ENCODE measurements at regions of chr10 and their contacts with region 1.

Region 1: GRCh38 chr10:97341416-97341815 is 6.9 kb upstream of the FRAT2 start:
- DNase-seq: no peak
- H3K4me3 ChIP-seq: no peak overlapping the region
- H3K27ac ChIP-seq: no peak overlapping the region
- H3K4me1 ChIP-seq: peaks cover 11% of the 10 kb centered on the region
- H3K27me3 ChIP-seq: no peaks in the 10 kb centered on the region
- CTCF ChIP-seq: no peak

Region 2: GRCh38 chr10:97434055-97434454 is 92.6 kb after region 1 on chr10:
- CTCF ChIA-PET with region 1: no interaction called
- dilution Hi-C with region 1: loop called (anchors 5 kb)
- in situ Hi-C with region 1: no loop called
- intact Hi-C with region 1: no loop called
- DNase-seq: no peak
- H3K4me3 ChIP-seq: no peak overlapping the region
- H3K27ac ChIP-seq: no peak overlapping the region
- H3K4me1 ChIP-seq: no peaks in the 10 kb centered on the region
- H3K27me3 ChIP-seq: no peaks in the 10 kb centered on the region
- CTCF ChIP-seq: peak in 1 of 2 donors; percentile 7

Region 3: DNA sequence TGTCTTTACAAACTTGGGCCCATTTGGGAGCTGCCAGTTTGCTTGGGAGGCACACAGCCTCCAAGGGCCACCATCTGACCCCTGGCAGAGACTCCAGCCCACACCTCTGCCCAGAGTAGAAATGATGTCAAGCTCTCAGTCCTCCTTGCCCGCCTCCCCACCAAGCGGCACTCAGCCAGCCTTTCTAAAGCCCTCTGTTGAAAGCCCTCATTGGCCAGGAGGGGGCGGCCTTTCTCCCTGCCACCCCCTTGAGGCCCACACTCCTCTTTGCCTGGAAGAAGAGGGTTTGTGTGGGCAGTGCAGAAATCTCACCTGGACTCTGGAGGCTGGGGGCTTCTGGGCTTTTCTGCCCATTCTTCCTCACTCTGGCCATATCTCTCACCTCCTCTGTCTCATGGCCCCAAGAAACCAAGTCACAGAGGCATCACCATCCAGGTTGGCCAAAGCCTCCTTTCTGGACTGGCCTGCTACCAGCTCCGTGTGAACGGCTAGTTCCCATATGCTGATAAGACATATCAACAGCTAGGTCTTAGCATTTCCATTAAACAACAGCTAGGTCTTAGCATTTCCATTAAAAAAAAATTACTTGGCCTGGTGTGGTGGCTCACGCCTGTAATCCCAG is 193.4 kb after region 1 on chr10:
- CTCF ChIA-PET with region 1: no interaction called
- dilution Hi-C with region 1: no loop called
- in situ Hi-C with region 1: no loop called
- intact Hi-C with region 1: no loop called
- DNase-seq: no peak
- H3K4me3 ChIP-seq: no peak overlapping the region
- H3K27ac ChIP-seq: no peak overlapping the region
- H3K4me1 ChIP-seq: peaks cover 13% of the 10 kb centered on the region
- H3K27me3 ChIP-seq: no peaks in the 10 kb centered on the region
- CTCF ChIP-seq: peak; percentile 45 to 73

Measured in mammary epithelial cell (primary cell).